ENCODE measurements at regions of chr2 and their contacts with region 1.

Region 1: DNA sequence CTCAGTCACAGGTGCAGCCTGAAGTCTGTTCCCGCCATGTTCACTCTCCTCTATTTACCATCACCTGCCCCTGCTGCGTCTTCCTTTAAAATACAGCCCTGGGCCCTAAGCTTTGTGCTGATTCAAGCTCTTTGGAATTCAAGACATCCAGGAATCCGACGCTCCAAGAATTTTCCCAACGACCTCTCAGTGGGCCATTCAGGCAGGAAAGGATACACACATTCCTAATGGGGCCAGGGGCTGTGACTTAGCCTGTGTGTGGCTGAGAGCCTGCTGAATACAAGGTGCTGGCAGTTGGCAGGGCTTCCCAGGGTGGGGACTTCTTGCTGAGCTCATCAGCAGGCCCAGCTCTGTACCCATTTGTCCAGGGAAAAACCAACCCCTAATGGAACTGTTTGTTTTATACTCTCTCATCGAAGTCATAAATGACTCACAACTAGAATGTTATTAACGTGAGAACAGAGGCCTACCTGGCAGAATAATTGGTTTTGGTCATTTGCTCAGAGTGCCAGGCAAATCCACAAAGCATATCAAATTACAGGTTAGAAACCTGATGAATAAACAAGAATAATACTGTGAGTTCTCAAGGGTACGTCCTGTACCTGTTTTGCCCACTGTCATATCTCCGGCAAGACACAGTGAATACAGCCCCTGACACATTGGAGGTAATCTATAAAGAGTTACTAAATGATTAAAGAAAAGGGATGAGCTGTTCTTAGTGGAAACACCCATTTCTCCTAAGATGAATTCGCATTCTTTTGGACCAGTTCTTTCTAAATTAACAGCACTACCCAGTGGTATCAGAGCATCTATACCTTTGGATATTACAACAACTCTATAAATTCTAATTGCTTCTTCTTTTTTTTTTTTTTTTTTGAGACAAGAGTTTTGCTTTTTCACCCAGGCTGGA is 12.6 kb upstream of the KCMF1 start:
- DNase-seq: no peak
- ATAC-seq: peak; percentile 11
- H3K4me3 Mint-ChIP-seq: no peak overlapping the region
- H3K27ac Mint-ChIP-seq: peak overlapping the region; percentile 42
- H3K4me1 Mint-ChIP-seq: peaks cover 44% of the 10 kb centered on the region
- H3K27me3 Mint-ChIP-seq: no peaks in the 10 kb centered on the region
- CTCF ChIP-seq: no peak

Region 2: GRCh38 chr2:84946204-84947009 is 12.0 kb before region 1 on chr2:
- CTCF ChIA-PET with region 1: interaction called, 6 read pairs
- POLR2A ChIA-PET with region 1: interaction called, 28 read pairs
- intact Hi-C with region 1: no loop called
- DNase-seq: peak; percentile 44
- ATAC-seq: peak; percentile 77
- H3K4me3 Mint-ChIP-seq: peak overlapping the region; percentile 72
- H3K27ac Mint-ChIP-seq: peak overlapping the region; percentile 97
- H3K4me1 Mint-ChIP-seq: peaks cover 54% of the 10 kb centered on the region
- H3K27me3 Mint-ChIP-seq: no peaks in the 10 kb centered on the region
- CTCF ChIP-seq: no peak

Measured in activated B cell treated with CpG ODN at 0.5 μM for 24 hours (primary cell).